Endothelial cell of umbilical vein (primary cell): ENCODE measurements at regions of chr13 and their contacts with region 1.

Region 1: DNA sequence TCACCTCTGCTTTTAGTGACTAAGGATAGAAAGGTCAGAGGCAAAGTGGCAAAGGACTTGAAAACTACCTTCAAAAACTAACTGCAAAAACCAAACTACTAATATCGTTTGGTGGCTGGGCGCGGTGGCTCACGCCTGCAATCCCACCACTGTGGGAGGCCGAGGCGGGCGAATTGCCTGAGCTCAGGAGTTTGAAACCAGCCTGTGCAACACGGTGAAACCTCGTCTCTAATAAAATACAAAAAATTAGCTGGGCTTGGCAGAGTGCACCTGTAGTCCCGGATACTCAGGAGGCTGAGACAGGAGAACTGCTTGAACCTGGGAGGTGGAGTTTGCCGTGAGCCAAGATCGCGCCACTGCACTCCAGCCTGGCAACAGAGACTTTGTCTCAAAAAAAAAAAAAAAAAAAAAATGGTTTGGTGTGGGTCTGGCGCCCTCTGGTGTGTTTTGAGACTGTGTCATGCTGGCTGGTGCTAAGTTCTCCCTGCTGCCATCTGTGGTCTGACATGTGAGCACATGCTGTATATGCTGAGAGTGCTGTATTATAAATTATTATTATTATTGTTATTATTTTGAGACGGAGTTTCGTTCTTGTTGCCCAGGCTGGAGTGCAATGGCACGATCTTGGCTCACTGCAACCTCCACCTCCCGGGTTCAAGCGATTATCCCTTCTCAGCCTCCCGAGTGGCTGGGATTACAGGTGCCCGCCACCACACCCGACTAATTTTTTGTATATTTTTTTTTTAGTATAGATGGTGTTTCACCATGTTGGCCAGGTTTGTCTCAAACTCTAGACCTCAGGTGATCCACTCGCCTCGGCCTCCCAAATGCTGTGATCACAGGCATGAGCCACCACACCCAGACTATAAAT is 36.0 kb upstream of the RNF17 start:
- DNase-seq: peak; percentile 71
- H3K4me3 ChIP-seq: no peak overlapping the region
- H3K27ac ChIP-seq: no peak overlapping the region
- H3K4me1 ChIP-seq: no peaks in the 10 kb centered on the region
- H3K27me3 ChIP-seq: peaks cover 0 to 2% of the 10 kb centered on the region in 2 experiments
- CTCF ChIP-seq: peak; percentile 51 to 82
- POLR2A ChIP-seq: no peak

Region 2: GRCh38 chr13:24491845-24492244 is 236.1 kb before region 1 on chr13:
- CTCF ChIA-PET with region 1: no interaction called
- POLR2A ChIA-PET with region 1: no interaction called
- dilution Hi-C with region 1: no loop called
- intact Hi-C with region 1: no loop called
- DNase-seq: peak; percentile 54
- H3K4me3 ChIP-seq: no peak overlapping the region
- H3K27ac ChIP-seq: no peak overlapping the region
- H3K4me1 ChIP-seq: no peaks in the 10 kb centered on the region
- H3K27me3 ChIP-seq: no peaks in the 10 kb centered on the region
- CTCF ChIP-seq: peak; percentile 13 to 23
- POLR2A ChIP-seq: no peak

Region 3: DNA sequence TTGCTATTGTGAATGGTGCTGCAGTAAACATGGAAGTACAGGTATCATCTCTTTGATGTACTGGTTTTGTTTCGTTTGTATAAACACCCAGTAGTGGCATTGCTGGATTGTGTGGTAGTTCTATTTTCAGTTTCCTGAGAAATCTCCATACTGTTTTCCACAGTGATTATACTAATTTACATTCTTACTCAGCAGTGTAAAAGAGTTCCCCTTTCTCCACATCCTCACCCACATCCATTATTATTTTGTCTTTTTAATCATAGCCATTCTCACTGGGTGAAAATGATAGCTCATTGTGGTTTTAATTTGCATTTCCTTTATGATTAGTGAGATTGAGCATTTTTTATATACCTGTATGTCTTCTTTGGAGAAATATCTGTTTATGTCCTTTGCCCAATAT is 153.1 kb before region 1 on chr13:
- CTCF ChIA-PET with region 1: interaction called, 7 read pairs
- POLR2A ChIA-PET with region 1: no interaction called
- dilution Hi-C with region 1: no loop called
- intact Hi-C with region 1: loop called (anchors 5 kb)
- DNase-seq: no peak
- H3K4me3 ChIP-seq: no peak overlapping the region
- H3K27ac ChIP-seq: no peak overlapping the region
- H3K4me1 ChIP-seq: no peaks in the 10 kb centered on the region
- H3K27me3 ChIP-seq: no peaks in the 10 kb centered on the region
- CTCF ChIP-seq: no peak
- POLR2A ChIP-seq: no peak

Region 4: DNA sequence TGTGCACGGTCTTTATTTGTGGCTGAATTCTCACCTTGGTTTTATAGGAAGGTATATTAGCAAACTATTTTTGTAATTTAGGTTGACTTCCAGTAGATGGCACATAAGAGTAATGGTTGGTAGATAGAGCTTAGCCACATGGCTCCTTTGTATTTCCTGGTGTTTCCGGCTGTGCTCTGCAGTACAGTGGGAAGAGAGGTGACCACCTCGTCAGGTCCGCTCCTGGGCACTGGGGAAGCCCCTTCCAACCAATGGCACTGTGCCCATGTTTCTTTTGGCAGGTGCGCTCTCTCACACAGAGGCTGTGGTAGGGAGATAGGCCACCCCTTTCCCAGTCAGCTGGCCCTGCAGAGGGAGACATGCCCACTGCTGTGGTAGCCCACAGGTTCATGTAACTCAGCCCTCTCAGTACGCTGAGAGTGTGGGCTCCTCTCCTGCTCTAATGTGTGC is 122.0 kb before region 1 on chr13:
- CTCF ChIA-PET with region 1: interaction called, 11 read pairs
- POLR2A ChIA-PET with region 1: no interaction called
- dilution Hi-C with region 1: no loop called
- intact Hi-C with region 1: no loop called
- DNase-seq: no peak
- H3K4me3 ChIP-seq: no peak overlapping the region
- H3K27ac ChIP-seq: no peak overlapping the region
- H3K4me1 ChIP-seq: no peaks in the 10 kb centered on the region
- H3K27me3 ChIP-seq: no peaks in the 10 kb centered on the region
- CTCF ChIP-seq: no peak
- POLR2A ChIP-seq: no peak

Region 5: DNA sequence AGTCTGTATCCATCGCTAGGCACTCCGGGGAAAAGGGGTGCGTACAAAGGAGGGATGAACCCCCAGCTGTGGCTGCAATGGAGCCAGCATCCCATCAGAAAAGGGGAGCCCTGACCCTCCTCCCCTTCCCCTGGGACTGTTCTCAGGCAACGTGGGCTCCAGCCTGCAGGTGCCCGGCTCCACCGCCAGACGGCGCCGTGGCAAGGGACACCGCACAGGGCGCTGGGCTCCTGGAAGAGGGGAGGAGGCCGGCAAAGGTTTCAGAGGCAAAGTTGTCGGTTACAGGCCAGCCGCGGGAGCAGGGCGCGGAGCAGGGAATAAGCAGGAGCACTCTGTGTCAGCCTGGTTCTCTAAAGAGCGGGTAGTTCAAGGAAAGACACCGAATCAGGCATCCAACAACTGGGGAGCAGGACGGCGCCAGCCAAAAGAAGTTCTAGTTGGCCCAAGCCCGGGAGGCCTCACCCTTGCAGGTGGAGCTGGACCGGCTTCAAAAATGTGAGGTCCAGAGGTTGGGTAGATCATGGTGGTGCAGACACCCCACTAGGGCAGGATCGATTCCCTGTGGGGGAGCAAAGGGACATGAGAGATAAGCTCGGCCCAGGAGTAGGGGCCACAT is 100.8 kb before region 1 on chr13:
- CTCF ChIA-PET with region 1: interaction called, 11 read pairs
- POLR2A ChIA-PET with region 1: no interaction called
- dilution Hi-C with region 1: no loop called
- intact Hi-C with region 1: loop called (anchors 1 kb)
- DNase-seq: no peak
- H3K4me3 ChIP-seq: no peak overlapping the region
- H3K27ac ChIP-seq: no peak overlapping the region
- H3K4me1 ChIP-seq: no peaks in the 10 kb centered on the region
- H3K27me3 ChIP-seq: no peaks in the 10 kb centered on the region
- CTCF ChIP-seq: peak; percentile 67 to 85
- POLR2A ChIP-seq: no peak

Region 6: DNA sequence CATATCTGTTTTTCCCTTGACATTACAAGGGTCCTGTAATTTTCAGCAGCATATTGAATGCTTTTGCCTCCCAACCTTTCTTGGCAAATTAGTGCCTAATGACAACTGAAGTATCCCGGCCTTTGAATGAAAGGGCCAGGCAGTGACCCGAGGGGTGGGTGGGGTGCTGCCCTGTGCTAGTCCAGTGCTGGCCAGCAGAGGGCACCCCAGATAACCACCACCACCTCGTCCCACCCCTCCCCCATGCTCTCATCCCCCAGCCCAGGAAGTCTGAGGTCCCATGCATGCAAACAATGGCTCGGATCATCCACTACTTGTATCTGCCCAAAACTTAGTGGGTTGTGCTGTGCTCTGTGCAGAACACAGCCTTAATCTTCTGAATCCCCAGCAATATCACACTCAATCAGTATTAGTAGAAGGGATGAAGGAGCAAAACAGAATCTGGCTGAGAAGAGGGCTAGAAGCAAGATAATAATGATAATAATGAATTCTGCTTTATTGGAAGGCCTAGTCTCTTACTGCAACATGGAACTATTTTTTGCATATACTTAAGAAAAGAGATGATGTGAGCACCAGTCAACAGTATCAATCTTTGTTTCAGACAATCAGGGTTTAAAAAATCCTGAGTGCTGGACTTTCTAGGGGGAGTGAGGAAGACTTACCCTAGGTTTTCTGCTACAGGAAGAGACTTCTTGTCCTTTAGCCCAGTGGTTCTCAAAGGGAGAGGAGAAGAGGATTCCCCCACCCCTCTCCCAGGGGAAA is 43.9 kb before region 1 on chr13:
- CTCF ChIA-PET with region 1: interaction called, 11 read pairs
- POLR2A ChIA-PET with region 1: no interaction called
- dilution Hi-C with region 1: no loop called
- intact Hi-C with region 1: loop called (anchors 1 kb)
- DNase-seq: peak; percentile 28
- H3K4me3 ChIP-seq: no peak overlapping the region
- H3K27ac ChIP-seq: no peak overlapping the region
- H3K4me1 ChIP-seq: no peaks in the 10 kb centered on the region
- H3K27me3 ChIP-seq: peaks cover 16 to 26% of the 10 kb centered on the region in 2 experiments
- CTCF ChIP-seq: peak; percentile 51 to 87
- POLR2A ChIP-seq: no peak

Region 7: GRCh38 chr13:24693862-24694471 is 34.0 kb before region 1 on chr13:
- CTCF ChIA-PET with region 1: interaction called, 43 read pairs
- POLR2A ChIA-PET with region 1: no interaction called
- dilution Hi-C with region 1: no loop called
- intact Hi-C with region 1: loop called (anchors 1 kb)
- DNase-seq: peak; percentile 47
- H3K4me3 ChIP-seq: no peak overlapping the region
- H3K27ac ChIP-seq: no peak overlapping the region
- H3K4me1 ChIP-seq: no peaks in the 10 kb centered on the region
- H3K27me3 ChIP-seq: peaks cover 0 to 2% of the 10 kb centered on the region in 2 experiments
- CTCF ChIP-seq: peak; percentile 68 to 69
- POLR2A ChIP-seq: no peak